Dendritic cell treated with granulocyte-macrophage colony-stimulating factor and Interleukin-4, amounts not matched to agents 40 ng/mL and 50 ng/mL, for 4 days (primary cell): ENCODE measurements at regions of chr1 and their contacts with region 1.

Region 1: DNA sequence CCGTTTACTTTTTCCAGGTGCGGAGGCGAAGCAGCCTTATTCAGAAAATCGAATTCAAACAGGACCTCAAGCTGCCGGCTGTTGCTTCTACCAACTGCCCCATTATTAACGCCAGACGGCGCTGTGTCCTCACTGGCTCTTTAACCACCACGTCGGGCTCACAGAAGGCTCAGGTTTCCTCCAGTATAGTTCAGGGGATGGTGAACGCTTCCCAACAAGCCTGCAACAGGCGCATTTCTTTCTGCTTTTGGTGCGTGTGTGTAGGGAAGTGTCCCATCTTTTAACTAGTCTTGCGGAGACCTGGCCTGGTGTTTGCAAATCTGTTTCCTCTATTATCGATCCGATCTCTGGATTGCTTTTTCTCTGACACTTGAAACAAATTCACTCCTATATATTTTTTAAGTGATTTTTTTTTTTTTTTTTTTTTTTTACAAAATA is 791 bp upstream of the STUM start:
- H3K4me3 Mint-ChIP-seq: no peak overlapping the region
- H3K27ac Mint-ChIP-seq: no peak overlapping the region
- H3K4me1 Mint-ChIP-seq: peaks cover 20% of the 10 kb centered on the region
- H3K27me3 Mint-ChIP-seq: peaks cover 55% of the 10 kb centered on the region

Region 2: GRCh38 chr1:226476648-226477319 is 71.0 kb before region 1 on chr1:
- intact Hi-C with region 1: no loop called
- H3K4me3 Mint-ChIP-seq: no peak overlapping the region
- H3K27ac Mint-ChIP-seq: no peak overlapping the region
- H3K4me1 Mint-ChIP-seq: no peaks in the 10 kb centered on the region
- H3K27me3 Mint-ChIP-seq: no peaks in the 10 kb centered on the region

Region 3: GRCh38 chr1:226608699-226609505 is 61.1 kb after region 1 on chr1:
- intact Hi-C with region 1: loop called (anchors 1 kb)
- H3K4me3 Mint-ChIP-seq: no peak overlapping the region
- H3K27ac Mint-ChIP-seq: no peak overlapping the region
- H3K4me1 Mint-ChIP-seq: no peaks in the 10 kb centered on the region
- H3K27me3 Mint-ChIP-seq: peaks cover 7% of the 10 kb centered on the region